ENCODE measurements at regions of chr16 and their contacts with region 1.

Region 1: GRCh38 chr16:17529982-17530765 is 59.4 kb upstream of the XYLT1 start:
- DNase-seq: peak; percentile 11 to 71 (median 54)
- ATAC-seq: peak; percentile 85
- H3K4me3 ChIP-seq: peak overlapping the region; percentile 97
- H3K4me3 Mint-ChIP-seq: peak overlapping the region; percentile 78 to 95 (median 89)
- H3K27ac ChIP-seq: peak overlapping the region; percentile 52
- H3K27ac Mint-ChIP-seq: peak overlapping the region; percentile 90 to 98 (median 93)
- H3K4me1 ChIP-seq: peaks cover 4 to 6% of the 10 kb centered on the region in 2 donors
- H3K4me1 Mint-ChIP-seq: peaks cover 8 to 36% (median 25%) of the 10 kb centered on the region in 7 donors
- H3K27me3 ChIP-seq: no peaks in the 10 kb centered on the region
- H3K27me3 Mint-ChIP-seq: peaks cover 0 to 4% (median 0%) of the 10 kb centered on the region in 5 donors

Region 2: GRCh38 chr16:17476414-17477270 is 53.5 kb before region 1 on chr16:
- CTCF ChIA-PET with region 1: interaction called, 4 read pairs
- POLR2A ChIA-PET with region 1: no interaction called
- intact Hi-C with region 1: loop called (anchors 2 to 5 kb)
- DNase-seq: peak in 6 of 9 donors; percentile 36 to 56 (median 48)
- ATAC-seq: peak; percentile 80
- H3K4me3 ChIP-seq: no peak overlapping the region
- H3K4me3 Mint-ChIP-seq: peak overlapping the region in 1 of 10 donors; percentile 7
- H3K27ac ChIP-seq: no peak overlapping the region
- H3K27ac Mint-ChIP-seq: peak overlapping the region in 4 of 9 donors; percentile 10 to 50 (median 30)
- H3K4me1 ChIP-seq: peaks cover 10 to 13% of the 10 kb centered on the region in 2 donors
- H3K4me1 Mint-ChIP-seq: peaks cover 21 to 33% (median 28%) of the 10 kb centered on the region in 7 donors
- H3K27me3 ChIP-seq: no peaks in the 10 kb centered on the region
- H3K27me3 Mint-ChIP-seq: peaks cover 0 to 40% (median 7%) of the 10 kb centered on the region in 5 donors